CD8-positive, alpha-beta memory T cell (primary cell): ENCODE measurements at regions of chr13 and their contacts with region 1.

Region 1: DNA sequence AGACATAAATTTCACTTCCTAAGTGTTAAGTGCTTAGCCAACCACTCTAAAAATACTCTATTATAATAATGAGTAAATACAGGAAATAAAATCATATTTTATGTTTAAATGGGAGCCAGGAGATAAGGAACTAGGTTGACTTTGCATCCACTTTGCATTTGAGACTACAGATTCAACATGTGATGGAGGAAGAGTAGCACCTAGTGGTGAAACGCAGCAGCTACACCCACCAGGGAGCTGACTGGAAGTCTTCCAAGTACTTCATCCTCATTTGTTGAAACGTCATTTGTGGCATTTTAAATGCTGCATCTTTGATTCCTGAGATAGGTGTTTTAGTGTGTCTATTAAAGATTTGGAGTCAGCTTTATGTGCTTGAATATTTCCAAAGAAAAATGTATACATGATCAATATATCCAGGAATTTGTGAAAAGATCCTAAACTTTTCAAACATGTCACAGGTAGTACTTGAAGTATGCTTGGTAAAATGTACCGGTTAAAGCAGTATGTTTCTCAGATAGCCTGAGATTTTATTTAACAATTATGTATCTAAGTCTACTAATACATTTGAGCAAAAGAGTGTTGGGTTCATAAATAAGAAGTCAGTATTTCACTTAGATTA is 17.4 kb upstream of the KCTD12 start:
- DNase-seq: peak; percentile 38 to 76 (median 48)
- H3K4me3 ChIP-seq: no peak overlapping the region
- H3K4me3 Mint-ChIP-seq: no peak overlapping the region
- H3K27ac ChIP-seq: no peak overlapping the region
- H3K27ac Mint-ChIP-seq: no peak overlapping the region
- H3K4me1 ChIP-seq: no peaks in the 10 kb centered on the region
- H3K4me1 Mint-ChIP-seq: no peaks in the 10 kb centered on the region
- H3K27me3 ChIP-seq: no peaks in the 10 kb centered on the region
- H3K27me3 Mint-ChIP-seq: peaks cover 5 to 45% of the 10 kb centered on the region in 2 donors

Region 2: DNA sequence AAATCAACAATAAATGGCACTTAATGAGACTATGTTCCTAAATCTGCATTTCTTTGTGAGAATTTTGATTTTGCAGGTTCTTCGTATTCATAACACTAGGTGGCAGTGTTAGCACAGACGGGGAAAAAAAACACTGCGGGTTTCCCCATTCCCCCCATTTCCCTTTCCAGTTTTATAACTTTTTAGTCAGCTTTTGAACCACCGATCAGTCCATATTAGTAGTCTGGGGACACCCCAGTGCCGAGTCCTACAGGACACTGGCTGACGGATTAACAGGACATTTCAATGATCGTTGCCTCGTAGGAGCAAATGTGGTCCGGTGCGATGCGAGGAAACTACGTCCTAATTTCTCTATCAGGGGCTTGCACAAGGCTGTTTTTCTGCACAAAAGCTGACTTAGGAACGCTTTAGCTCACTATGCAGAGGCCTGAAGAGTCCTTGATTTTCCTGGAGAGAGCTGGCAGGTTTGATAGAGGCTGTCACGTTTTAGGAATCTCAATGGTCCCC is 1033.2 kb before region 1 on chr13:
- CTCF ChIA-PET with region 1: interaction called, 34 read pairs
- POLR2A ChIA-PET with region 1: no interaction called
- DNase-seq: peak in 3 of 5 donors; percentile 25 to 44 (median 31)
- H3K4me3 ChIP-seq: peak overlapping the region; percentile 45
- H3K4me3 Mint-ChIP-seq: peak overlapping the region; percentile 61 to 81 (median 75)
- H3K27ac ChIP-seq: no peak overlapping the region
- H3K27ac Mint-ChIP-seq: peak overlapping the region in 7 of 8 donors; percentile 24 to 87 (median 72)
- H3K4me1 ChIP-seq: peaks cover 18% of the 10 kb centered on the region
- H3K4me1 Mint-ChIP-seq: peaks cover 8 to 23% (median 17%) of the 10 kb centered on the region in 3 donors
- H3K27me3 ChIP-seq: no peaks in the 10 kb centered on the region
- H3K27me3 Mint-ChIP-seq: peaks cover 9 to 16% of the 10 kb centered on the region in 2 donors

Region 3: DNA sequence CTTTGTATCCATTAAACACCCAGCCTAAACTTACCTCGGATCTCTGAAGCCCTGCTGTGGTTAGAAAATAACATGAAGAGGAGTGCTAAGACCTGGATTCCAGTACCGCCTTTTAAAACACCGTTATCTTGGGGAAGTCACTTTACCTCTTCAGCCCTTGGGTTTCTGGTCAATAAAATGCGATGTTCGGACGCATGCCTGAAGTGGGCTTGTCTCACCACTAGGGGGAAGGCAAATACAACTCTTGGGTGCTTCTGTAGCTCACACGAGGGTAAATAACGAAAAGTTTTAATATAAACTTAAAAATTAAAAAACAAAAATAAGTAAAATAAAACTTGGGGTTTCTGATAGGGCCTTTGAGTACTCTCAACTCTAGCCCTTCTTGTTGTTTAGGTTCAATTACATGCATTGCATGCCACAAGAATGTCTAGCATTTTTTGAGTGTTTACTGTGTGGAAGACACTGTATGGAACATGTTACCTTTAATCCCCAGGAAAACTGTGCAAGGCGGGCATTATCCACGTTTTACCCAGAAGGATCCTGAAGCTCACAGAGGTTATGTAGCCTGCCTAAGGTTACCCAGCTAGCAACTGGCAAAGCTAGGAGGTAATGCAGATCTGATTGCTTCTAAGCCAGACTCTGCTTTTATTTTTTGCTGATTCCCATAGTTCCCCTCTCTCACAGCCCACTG is 1027.1 kb before region 1 on chr13:
- CTCF ChIA-PET with region 1: interaction called, 34 read pairs
- POLR2A ChIA-PET with region 1: no interaction called
- DNase-seq: peak in 4 of 5 donors; percentile 8 to 55 (median 42)
- H3K4me3 ChIP-seq: no peak overlapping the region
- H3K4me3 Mint-ChIP-seq: peak overlapping the region in 3 of 7 donors; percentile 5 to 66 (median 42)
- H3K27ac ChIP-seq: no peak overlapping the region
- H3K27ac Mint-ChIP-seq: peak overlapping the region in 1 of 8 donors; percentile 51
- H3K4me1 ChIP-seq: peaks cover 5% of the 10 kb centered on the region
- H3K4me1 Mint-ChIP-seq: peaks cover 7 to 17% (median 16%) of the 10 kb centered on the region in 3 donors
- H3K27me3 ChIP-seq: no peaks in the 10 kb centered on the region
- H3K27me3 Mint-ChIP-seq: peaks cover 2 to 22% of the 10 kb centered on the region in 2 donors

Region 4: DNA sequence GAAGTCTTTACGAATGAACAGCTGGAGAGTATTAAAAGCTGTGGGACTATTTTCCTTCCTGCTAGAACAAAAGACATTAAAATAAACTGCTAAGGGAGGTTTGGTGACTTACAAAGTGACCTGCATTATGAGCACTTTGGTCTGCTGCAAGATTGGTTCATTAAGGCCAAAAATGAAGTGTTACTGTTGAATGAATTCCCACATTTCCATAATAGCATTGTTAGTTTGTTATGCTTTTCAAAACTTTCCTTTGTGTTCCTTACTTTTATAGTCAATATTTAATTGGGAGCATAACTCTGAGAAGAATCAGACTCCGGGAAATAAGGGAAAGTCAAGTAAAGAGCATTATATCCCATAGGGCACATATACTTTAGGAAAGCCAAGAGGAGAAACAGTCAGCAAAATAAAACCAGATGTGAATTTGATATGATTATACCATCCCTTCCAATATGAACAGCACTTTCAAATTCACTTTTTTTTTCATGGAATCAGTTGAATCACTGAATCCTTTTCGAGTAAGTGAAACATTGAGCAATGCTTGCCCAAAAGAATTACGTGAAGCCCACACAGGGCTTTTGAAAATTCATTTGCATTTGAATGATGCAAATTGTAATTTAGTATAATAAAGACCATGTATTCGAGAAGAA is 130.1 kb before region 1 on chr13:
- CTCF ChIA-PET with region 1: no interaction called
- POLR2A ChIA-PET with region 1: no interaction called
- DNase-seq: no peak
- H3K4me3 ChIP-seq: no peak overlapping the region
- H3K4me3 Mint-ChIP-seq: no peak overlapping the region
- H3K27ac ChIP-seq: no peak overlapping the region
- H3K27ac Mint-ChIP-seq: no peak overlapping the region
- H3K4me1 ChIP-seq: no peaks in the 10 kb centered on the region
- H3K4me1 Mint-ChIP-seq: no peaks in the 10 kb centered on the region
- H3K27me3 ChIP-seq: no peaks in the 10 kb centered on the region
- H3K27me3 Mint-ChIP-seq: peaks cover 0 to 2% of the 10 kb centered on the region in 2 donors

Region 5: GRCh38 chr13:76886292-76887075 is 17.2 kb before region 1 on chr13 and contains the start of gene KCTD12:
- CTCF ChIA-PET with region 1: interaction called, 13 read pairs
- POLR2A ChIA-PET with region 1: no interaction called
- DNase-seq: peak; percentile 37 to 84 (median 59)
- H3K4me3 ChIP-seq: peak within 1 kb of the TSS; percentile 57
- H3K4me3 Mint-ChIP-seq: peak within 1 kb of the TSS; percentile 77 to 90 (median 81)
- H3K27ac ChIP-seq: no peak within 1 kb of the TSS
- H3K27ac Mint-ChIP-seq: peak within 1 kb of the TSS in 3 of 8 donors; percentile 25 to 91 (median 27)
- H3K4me1 ChIP-seq: peaks cover 12% of the 10 kb centered on the region
- H3K4me1 Mint-ChIP-seq: peaks cover 11 to 22% (median 16%) of the 10 kb centered on the region in 3 donors
- H3K27me3 ChIP-seq: peaks cover 11% of the 10 kb centered on the region
- H3K27me3 Mint-ChIP-seq: peaks cover 20 to 66% of the 10 kb centered on the region in 2 donors
- total RNA-seq, gene KCTD12: 5.1 to 5.8 TPM